ENCODE measurements at regions of chr18 and their contacts with region 1.

Region 1: DNA sequence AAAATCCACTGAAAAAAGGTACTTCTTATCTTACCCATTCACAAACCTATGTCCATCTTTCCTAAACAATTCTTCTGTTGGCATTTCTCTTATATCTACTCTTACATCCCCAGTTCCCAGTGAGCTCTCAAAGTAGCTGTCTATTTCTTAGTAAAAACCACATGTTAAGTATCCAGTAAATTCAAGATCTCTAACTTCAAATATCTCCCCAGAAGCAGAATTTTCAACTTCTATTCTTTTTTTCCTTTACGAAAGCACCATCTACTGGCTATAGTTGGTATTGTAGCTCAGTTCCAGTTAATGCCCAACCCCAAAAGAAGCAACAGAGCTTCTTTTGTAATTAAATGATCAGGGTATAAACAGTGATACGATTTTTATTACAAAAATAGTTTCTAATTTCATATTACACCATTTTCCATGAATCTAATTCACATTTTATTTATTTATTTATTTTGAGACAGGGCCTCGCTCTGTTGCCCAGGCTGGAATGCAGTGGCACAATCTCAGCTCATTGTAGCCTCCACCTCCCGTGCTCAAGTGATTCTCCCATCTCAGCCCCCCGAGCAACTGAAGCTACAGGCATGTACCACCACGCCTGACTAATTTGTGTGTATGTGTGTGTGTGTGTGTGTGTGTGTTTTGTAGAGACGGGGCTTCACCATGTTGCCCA is 28.5 kb downstream of the HRH4 start:
- DNase-seq: peak; percentile 27
- ATAC-seq: peak; percentile 38; the same call in 1 of the 2 replicates
- H3K4me3 ChIP-seq: no peak overlapping the region
- H3K27ac ChIP-seq: no peak overlapping the region
- H3K4me1 ChIP-seq: 0 out of 4 replicates have a peak, but pooled peaks cover 0 to 5% of the 10 kb centered on the region in 2 experiments
- H3K27me3 ChIP-seq: no peaks in the 10 kb centered on the region
- CTCF ChIP-seq: peak; percentile 51 to 83 (median 63); a peak in 5 of 6 replicates
- POLR2A ChIP-seq: no peak
- RAD21 ChIP-seq: peak; percentile 75

Region 2: DNA sequence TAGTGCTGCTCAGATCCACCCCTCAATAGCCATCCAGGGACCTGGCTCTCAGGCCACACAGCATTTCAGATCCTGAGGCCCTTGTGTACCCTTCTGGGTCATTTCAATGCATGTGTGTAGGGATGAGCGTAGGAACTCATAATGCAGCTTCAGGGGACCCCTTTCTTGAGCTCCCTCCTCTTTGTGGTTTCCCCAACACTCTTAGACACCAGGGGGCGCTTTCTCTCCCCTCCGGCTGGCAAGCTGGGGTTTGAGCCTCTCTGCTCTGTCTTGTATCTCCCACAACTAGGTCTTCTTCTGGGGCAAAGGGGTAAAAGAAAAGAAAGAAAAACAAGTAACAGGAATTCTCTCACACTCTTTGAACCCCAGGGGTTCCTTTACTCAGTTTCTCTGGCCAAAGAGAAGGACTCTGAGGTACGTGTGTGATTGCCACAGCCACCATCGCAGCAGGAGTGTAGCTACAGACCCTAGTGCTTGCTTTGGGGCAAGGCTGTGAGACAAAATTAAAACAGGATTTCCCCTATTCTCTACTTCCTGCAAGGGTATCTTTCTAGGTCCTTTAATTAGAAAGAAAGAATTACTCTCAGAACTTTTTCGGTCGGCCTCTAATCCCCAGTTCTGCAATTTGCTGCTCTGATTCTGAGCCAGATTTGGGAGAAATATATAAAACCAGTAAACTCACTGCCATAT is 312.1 kb before region 1 on chr18:
- CTCF ChIA-PET with region 1: interaction called, 40 read pairs
- POLR2A ChIA-PET with region 1: no interaction called
- RAD21 ChIA-PET with region 1: interaction called in 1 of 2 experiments, 4 read pairs
- intact Hi-C with region 1: loop called (anchors 1 kb)
- DNase-seq: peak; percentile 35
- ATAC-seq: peak; percentile 85
- H3K4me3 ChIP-seq: no peak overlapping the region
- H3K27ac ChIP-seq: no peak overlapping the region
- H3K4me1 ChIP-seq: peaks cover 0 to 8% of the 10 kb centered on the region in 2 experiments; a peak in 1 of 4 replicates
- H3K27me3 ChIP-seq: no peaks in the 10 kb centered on the region
- CTCF ChIP-seq: peak; percentile 63 to 91 (median 84)
- POLR2A ChIP-seq: no peak
- RAD21 ChIP-seq: peak; percentile 70

Region 3: DNA sequence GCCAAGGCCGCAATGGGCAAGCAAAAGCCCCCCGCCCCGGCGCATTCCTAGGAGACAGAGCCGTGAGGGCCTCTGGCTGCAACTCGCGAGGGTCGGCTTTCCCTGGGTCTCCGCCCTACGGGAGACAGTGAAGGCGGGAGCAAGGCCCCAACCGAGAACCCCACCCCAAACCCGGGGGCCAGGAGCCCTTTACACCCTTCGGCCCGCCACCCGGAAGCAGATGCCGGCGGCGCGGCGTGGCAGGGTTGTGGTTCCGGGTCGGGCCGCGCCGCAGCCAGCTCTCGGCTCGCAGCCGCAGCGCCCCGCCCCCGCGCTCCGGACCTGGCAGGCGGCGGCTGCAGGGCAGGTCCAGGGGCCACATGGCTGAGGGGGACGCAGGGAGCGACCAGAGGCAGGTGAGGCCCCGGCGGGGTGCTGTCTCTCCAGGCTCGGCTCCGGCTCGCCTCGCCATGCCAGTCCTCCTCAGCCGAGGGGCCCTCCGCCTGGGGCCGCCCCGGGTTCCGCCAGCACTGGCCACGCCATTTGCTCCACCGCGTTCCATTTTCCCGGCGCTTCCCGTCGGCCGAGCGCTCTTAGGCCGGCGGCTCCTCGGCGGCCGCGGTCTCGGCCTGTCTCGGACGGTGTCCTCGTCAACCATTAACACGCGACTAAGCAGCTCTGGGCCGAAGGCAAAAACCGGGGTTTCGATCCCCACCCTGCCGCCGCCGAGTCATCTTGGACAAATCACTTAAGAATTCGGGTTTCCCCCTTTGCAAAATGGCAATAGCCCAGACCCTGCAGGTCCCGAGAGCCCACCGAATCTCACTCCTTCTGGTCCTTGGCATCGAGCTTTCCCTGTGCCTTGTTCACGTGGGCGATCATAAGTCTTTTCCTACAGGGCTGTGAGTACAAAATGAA is 62.3 kb before region 1 on chr18 and contains the start of gene IMPACT:
- CTCF ChIA-PET with region 1: interaction called, 7 read pairs
- POLR2A ChIA-PET with region 1: no interaction called
- RAD21 ChIA-PET with region 1: no interaction called
- intact Hi-C with region 1: loop called (anchors 5 kb)
- DNase-seq: peak; percentile 54
- ATAC-seq: peak; percentile 91
- H3K4me3 ChIP-seq: peak within 1 kb of the TSS; percentile 60 to 76
- H3K27ac ChIP-seq: peak within 1 kb of the TSS; percentile 96
- H3K4me1 ChIP-seq: peaks cover 5 to 21% of the 10 kb centered on the region in 2 experiments; a peak in 3 of 4 replicates
- H3K27me3 ChIP-seq: no peaks in the 10 kb centered on the region
- CTCF ChIP-seq: no peak
- POLR2A ChIP-seq: peak; percentile 79
- RAD21 ChIP-seq: no peak
- total RNA-seq, gene IMPACT: 46.4 TPM

Region 4: DNA sequence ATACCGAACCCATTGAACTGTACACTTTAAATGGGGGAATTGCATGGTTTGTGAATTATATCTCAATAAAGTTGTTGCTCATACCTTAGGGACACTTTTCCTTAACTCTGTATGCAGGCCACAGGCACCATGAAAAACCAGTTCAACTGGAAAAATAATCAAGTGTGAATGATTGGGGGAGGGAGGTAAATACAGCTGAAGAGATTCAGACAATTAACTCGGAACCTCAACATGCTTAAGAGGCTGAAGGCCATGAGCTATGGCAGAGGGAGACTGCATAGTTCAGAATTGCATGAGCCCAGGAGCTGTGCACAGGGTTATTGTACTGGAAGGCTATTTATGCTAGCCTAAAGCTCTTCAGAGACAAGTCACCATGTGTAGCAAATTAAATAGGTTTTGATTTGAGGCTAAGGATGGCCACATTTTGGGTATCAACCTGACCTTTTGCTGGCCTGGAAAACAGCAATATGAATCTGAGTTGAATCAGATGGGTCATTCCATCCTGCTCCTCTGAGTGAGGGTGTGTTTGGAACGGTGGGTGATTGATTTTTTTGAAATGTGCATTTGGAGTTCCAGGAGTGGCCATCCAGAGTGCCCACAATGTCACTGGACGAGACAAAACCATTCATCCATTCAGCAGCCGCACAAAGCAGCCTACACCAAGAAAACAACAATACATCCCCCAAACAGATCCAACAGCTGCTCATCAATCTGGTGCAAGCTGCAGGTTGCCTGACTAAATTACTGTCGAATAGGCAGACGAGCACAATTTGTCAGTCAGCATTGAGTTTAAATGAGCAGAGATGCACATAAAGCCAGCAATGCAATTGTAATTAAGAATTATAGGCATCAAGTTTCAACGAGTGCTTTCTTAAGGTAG is 13.9 kb after region 1 on chr18:
- CTCF ChIA-PET with region 1: interaction called, 12 read pairs
- POLR2A ChIA-PET with region 1: no interaction called
- RAD21 ChIA-PET with region 1: no interaction called
- intact Hi-C with region 1: no loop called
- DNase-seq: no peak
- ATAC-seq: no peak
- H3K4me3 ChIP-seq: no peak overlapping the region
- H3K27ac ChIP-seq: no peak overlapping the region
- H3K4me1 ChIP-seq: peaks cover 0 to 3% of the 10 kb centered on the region in 2 experiments; a peak in 1 of 4 replicates
- H3K27me3 ChIP-seq: no peaks in the 10 kb centered on the region
- CTCF ChIP-seq: no peak
- POLR2A ChIP-seq: no peak
- RAD21 ChIP-seq: no peak

Region 5: GRCh38 chr18:24543805-24544498 is 55.0 kb after region 1 on chr18:
- CTCF ChIA-PET with region 1: interaction called, 11 read pairs
- POLR2A ChIA-PET with region 1: no interaction called
- RAD21 ChIA-PET with region 1: no interaction called
- intact Hi-C with region 1: loop called (anchors 10 kb)
- DNase-seq: peak; percentile 22
- ATAC-seq: peak; percentile 73
- H3K4me3 ChIP-seq: no peak overlapping the region
- H3K27ac ChIP-seq: no peak overlapping the region
- H3K4me1 ChIP-seq: no peaks in the 10 kb centered on the region
- H3K27me3 ChIP-seq: no peaks in the 10 kb centered on the region
- CTCF ChIP-seq: peak; percentile 43 to 75 (median 47); a peak in 5 of 6 replicates
- POLR2A ChIP-seq: no peak
- RAD21 ChIP-seq: peak; percentile 66